Mammary epithelial cell (primary cell): ENCODE measurements at regions of chr10 and their contacts with region 1.

Region 1: DNA sequence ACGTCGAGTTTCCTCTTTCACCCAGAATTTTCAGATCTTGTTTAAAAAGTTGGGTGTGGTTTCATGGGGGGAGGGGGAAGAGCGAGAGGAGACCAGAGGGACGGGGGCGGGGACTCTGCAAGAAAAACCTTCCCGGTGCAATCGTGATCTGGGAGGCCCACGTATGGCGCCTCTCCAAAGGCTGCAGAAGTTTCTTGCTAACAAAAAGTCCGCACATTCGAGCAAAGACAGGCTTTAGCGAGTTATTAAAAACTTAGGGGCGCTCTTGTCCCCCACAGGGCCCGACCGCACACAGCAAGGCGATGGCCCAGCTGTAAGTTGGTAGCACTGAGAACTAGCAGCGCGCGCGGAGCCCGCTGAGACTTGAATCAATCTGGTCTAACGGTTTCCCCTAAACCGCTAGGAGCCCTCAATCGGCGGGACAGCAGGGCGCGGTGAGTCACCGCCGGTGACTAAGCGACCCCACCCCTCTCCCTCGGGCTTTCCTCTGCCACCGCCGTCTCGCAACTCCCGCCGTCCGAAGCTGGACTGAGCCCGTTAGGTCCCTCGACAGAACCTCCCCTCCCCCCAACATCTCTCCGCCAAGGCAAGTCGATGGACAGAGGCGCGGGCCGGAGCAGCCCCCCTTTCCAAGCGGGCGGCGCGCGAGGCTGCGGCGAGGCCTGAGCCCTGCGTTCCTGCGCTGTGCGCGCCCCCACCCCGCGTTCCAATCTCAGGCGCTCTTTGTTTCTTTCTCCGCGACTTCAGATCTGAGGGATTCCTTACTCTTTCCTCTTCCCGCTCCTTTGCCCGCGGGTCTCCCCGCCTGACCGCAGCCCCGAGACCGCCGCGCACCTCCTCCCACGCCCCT is at the start of gene VIM:
- DNase-seq: peak; percentile 97
- H3K4me3 ChIP-seq: peak within 1 kb of the TSS; percentile 70 to 89 (median 81)
- H3K27ac ChIP-seq: peak within 1 kb of the TSS; percentile 93
- H3K4me1 ChIP-seq: peaks cover 24% of the 10 kb centered on the region
- H3K27me3 ChIP-seq: no peaks in the 10 kb centered on the region
- CTCF ChIP-seq: peak in 1 of 2 donors; percentile 7
- total RNA-seq, gene VIM: 1,327 to 1,978 TPM

Region 2: DNA sequence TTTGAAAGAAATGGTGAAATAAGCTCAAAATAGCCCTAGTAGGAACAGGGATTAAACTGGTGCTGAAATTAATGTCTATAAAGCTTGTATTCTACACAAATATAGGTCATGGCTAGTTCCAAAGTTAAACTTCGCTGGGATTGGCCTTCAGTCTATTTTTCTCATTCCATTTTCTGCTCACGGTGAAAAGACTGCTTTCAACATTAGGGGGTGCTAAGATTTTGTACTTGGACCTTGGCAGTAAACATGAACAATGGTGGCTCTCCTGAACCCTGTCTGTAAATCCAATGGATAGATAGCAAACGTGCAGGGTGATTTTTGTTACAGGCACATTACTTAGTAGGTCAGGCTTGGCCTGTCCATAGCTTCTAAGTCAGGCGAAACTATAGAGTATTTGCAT is 375.1 kb before region 1 on chr10:
- CTCF ChIA-PET with region 1: no interaction called
- dilution Hi-C with region 1: loop called (anchors 25 kb)
- in situ Hi-C with region 1: no loop called
- intact Hi-C with region 1: no loop called
- DNase-seq: no peak
- H3K4me3 ChIP-seq: no peak overlapping the region
- H3K27ac ChIP-seq: no peak overlapping the region
- H3K4me1 ChIP-seq: peaks cover 18% of the 10 kb centered on the region
- H3K27me3 ChIP-seq: no peaks in the 10 kb centered on the region
- CTCF ChIP-seq: peak in 1 of 2 donors; percentile 21

Region 3: DNA sequence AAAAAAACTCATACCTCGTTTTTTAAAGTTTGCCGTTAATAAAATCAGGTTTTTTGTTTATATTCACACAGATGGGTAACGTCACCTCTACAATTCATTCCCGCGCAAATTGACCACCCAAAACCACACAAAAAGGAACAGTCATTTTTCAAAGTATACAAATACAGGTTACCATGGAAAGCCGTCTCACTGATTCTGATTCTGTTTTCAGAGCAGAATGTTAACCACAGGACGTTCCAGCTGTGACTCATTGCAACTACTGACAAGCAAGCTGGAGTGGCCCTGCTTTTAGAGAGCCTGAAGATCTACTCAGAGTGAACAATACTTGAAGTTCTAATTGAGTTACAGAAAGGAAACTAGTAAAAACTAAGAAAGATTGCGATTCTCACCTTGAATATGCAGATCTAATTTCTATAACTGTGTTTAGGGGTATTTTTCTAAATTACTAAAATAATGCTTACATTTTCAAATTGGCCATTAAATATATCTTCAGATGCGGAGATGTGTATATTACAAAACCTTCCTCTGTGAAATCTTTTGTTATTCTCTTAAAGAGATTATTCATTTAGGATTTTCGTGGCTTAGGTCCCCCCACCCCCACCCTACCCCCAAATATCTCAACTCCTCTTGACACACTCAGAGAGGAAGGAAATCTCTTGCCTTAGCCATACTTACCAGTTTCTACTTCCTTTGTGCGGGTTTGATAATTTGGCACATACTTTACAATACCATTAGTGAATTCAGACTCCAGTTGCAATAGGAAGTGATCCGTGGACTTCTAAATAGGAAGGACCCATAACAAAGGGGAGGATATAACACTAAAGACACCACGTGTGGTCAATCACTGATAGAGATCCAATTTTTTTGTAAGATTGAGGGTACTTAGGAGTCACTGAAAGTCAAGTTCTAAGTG is 204.7 kb before region 1 on chr10:
- CTCF ChIA-PET with region 1: no interaction called
- dilution Hi-C with region 1: no loop called
- in situ Hi-C with region 1: no loop called
- intact Hi-C with region 1: loop called (anchors 5 kb)
- DNase-seq: peak; percentile 97
- H3K4me3 ChIP-seq: no peak overlapping the region
- H3K27ac ChIP-seq: peak overlapping the region; percentile 89
- H3K4me1 ChIP-seq: peaks cover 37% of the 10 kb centered on the region
- H3K27me3 ChIP-seq: no peaks in the 10 kb centered on the region
- CTCF ChIP-seq: no peak

Region 4: GRCh38 chr10:17075533-17076359 is 152.6 kb before region 1 on chr10:
- CTCF ChIA-PET with region 1: no interaction called
- dilution Hi-C with region 1: no loop called
- in situ Hi-C with region 1: no loop called
- intact Hi-C with region 1: loop called (anchors 5 kb)
- DNase-seq: peak; percentile 90
- H3K4me3 ChIP-seq: no peak overlapping the region
- H3K27ac ChIP-seq: peak overlapping the region; percentile 96
- H3K4me1 ChIP-seq: peaks cover 46% of the 10 kb centered on the region
- H3K27me3 ChIP-seq: no peaks in the 10 kb centered on the region
- CTCF ChIP-seq: no peak

Region 5: DNA sequence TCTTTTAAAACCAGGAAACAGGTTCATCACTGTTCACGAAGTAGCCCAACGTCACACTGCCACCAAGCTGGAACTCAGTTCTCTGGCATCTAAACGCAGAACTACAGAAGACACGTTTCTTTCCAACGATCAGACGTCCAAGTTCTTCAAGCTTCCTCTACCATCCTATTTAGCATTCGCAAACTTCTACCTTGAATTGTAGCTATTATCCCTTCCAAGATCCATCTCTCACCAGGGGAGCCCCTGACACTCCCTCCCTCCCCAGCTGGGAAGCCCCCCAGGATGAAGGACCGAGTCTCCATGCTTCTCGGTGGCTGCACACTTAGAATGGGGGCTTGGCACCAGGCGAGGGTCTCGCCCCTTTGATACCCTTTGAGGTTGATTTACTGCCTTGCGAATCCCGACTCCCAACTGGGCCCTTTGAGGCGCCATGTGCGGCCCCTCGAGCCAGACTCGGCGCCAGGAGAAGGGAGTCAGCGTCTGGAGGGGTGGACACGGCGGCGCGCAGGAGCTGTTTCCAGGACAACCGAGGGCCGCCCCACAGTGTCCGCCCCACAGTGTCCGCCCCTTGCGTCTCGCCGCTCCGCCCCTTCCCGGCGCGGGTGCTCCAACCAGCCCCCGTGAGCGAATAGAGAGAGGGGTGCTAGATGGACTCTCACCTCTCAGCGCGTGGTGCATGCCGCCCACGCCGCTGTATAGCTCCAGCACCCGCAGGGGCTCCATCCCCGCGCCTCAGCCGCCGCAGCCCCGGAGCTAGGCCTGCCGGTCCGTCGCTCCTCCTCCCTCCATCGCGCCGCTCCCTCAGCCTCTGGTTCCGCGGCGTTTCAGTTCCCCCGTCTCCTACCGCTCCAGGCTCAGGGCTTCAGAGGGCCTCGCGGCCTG is 27.2 kb before region 1 on chr10 and contains the start of gene TRDMT1:
- CTCF ChIA-PET with region 1: no interaction called
- dilution Hi-C with region 1: no loop called
- in situ Hi-C with region 1: no loop called
- intact Hi-C with region 1: loop called (anchors 1 kb)
- DNase-seq: peak; percentile 90
- H3K4me3 ChIP-seq: peak within 1 kb of the TSS; percentile 66 to 79 (median 73)
- H3K27ac ChIP-seq: peak within 1 kb of the TSS; percentile 92
- H3K4me1 ChIP-seq: peaks cover 20% of the 10 kb centered on the region
- H3K27me3 ChIP-seq: no peaks in the 10 kb centered on the region
- CTCF ChIP-seq: no peak
- total RNA-seq, gene TRDMT1: 3.5 to 6.2 TPM

Region 6: GRCh38 chr10:17257466-17258321 is 29.4 kb after region 1 on chr10:
- CTCF ChIA-PET with region 1: no interaction called
- dilution Hi-C with region 1: no loop called
- in situ Hi-C with region 1: no loop called
- intact Hi-C with region 1: loop called (anchors 2 kb)
- DNase-seq: peak; percentile 58
- H3K4me3 ChIP-seq: no peak overlapping the region
- H3K27ac ChIP-seq: no peak overlapping the region
- H3K4me1 ChIP-seq: no peaks in the 10 kb centered on the region
- H3K27me3 ChIP-seq: no peaks in the 10 kb centered on the region
- CTCF ChIP-seq: peak; percentile 83 to 86